Calu3 (cell line): ENCODE measurements at regions of chr7 and their contacts with region 1.

Region 1: DNA sequence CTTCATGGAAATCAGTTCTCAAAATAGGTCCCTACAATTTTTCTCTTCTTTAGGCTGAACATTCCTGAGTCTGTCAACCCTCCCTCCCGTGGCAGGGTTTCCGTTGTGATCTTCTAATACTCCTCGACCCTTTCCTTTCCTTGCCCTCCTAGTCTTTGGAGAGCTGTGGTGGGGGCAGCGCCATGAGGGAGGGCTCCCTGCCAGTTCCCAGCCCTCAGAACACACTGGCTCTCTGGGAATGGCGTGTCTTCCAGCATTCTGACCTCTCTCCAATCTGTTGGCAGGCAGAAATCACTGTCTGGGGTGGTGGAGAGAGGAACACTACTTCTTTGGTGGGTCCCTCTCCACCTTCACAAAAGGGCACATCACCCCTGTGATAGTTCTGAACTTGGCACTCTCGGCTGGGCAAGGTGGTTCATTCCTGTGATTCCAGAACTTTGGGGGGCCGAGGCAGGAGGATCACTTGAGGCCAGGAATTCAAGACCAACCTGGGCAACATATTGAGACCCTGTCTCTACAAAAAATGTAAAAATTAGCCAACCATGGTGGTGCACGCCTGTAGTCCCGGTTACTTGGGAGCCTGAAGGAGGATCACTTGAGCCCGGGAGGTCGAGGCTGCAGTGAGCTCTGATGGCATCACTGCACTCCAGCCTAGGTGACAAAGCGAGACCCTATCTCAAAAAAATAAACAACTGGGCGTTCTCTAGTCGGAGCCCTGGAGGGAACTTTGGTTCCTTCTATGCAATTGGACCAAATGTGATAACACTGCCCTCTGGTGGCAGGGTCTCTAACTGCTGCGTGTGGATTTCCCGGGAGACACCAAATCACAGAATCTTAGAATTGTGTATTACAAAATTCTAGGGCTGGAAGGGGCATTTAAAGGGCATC is 13.1 kb upstream of the ARPC1A start:
- DNase-seq: peak; percentile 72
- H3K4me3 Mint-ChIP-seq: no peak overlapping the region
- H3K27ac Mint-ChIP-seq: no peak overlapping the region
- H3K4me1 Mint-ChIP-seq: no peaks in the 10 kb centered on the region
- H3K27me3 Mint-ChIP-seq: no peaks in the 10 kb centered on the region
- CTCF ChIP-seq: peak; percentile 61

Region 2: DNA sequence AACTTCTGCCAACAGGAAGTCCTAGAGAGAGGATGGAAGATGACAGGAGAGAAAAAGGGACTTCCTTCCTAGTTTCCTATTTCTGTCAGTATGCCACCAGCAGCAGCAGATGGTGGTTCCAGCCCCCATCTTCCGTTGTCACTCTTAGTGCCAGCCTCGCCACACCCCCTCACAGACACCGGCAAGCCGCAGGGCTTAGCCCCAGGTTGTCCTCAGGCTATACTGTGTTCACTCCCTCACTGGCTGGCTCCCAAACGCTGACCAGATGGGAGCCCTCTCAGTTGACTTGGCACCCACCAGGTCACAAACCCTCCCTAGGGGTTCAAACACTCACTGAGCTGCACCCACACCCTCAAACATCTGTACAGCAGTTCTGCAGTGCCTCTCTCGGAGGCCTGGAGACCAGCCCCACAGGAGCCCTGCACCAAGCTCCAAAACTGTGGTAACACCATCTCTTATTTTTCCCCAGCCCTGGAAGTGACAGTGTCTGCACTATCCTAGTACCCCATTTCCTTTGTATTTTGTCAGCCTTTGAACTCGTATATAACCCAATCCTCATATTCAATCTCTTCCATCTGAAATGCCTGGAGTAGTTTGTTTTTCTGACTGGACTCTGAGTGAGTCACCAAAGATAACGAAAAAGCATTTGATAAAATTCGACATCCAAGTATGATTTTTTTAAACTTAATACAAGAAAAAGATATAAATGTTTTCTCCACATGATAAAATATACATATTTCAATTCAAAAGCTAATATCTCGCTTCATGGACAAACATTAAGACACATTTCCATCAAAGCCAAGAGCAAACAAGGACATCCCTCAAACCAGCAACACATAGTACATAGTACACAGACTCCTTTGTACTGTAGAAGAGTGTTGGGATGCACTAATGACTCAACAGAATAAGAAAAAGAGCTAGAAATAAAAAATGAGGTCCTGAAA is 203.2 kb before region 1 on chr7:
- CTCF ChIA-PET with region 1: no interaction called
- intact Hi-C with region 1: loop called (anchors 10 kb)
- DNase-seq: no peak
- H3K4me3 Mint-ChIP-seq: peak overlapping the region; percentile 47
- H3K27ac Mint-ChIP-seq: peak overlapping the region; percentile 78
- H3K4me1 Mint-ChIP-seq: peaks cover 68% of the 10 kb centered on the region
- H3K27me3 Mint-ChIP-seq: no peaks in the 10 kb centered on the region
- CTCF ChIP-seq: no peak

Region 3: GRCh38 chr7:99267481-99267840 is 45.1 kb before region 1 on chr7:
- CTCF ChIA-PET with region 1: no interaction called
- intact Hi-C with region 1: loop called (anchors 5 kb)
- DNase-seq: peak; percentile 84
- H3K4me3 Mint-ChIP-seq: no peak overlapping the region
- H3K27ac Mint-ChIP-seq: peak overlapping the region; percentile 89
- H3K4me1 Mint-ChIP-seq: peaks cover 21% of the 10 kb centered on the region
- H3K27me3 Mint-ChIP-seq: no peaks in the 10 kb centered on the region
- CTCF ChIP-seq: no peak

Region 4: GRCh38 chr7:99325001-99325493 is 12.5 kb after region 1 on chr7:
- CTCF ChIA-PET with region 1: no interaction called
- intact Hi-C with region 1: no loop called
- DNase-seq: no peak
- H3K4me3 Mint-ChIP-seq: peak overlapping the region; percentile 73
- H3K27ac Mint-ChIP-seq: peak overlapping the region; percentile 71
- H3K4me1 Mint-ChIP-seq: peaks cover 28% of the 10 kb centered on the region
- H3K27me3 Mint-ChIP-seq: no peaks in the 10 kb centered on the region
- CTCF ChIP-seq: no peak